B cell (primary cell): ENCODE measurements at regions of chr6 and their contacts with region 1.

Region 1: DNA sequence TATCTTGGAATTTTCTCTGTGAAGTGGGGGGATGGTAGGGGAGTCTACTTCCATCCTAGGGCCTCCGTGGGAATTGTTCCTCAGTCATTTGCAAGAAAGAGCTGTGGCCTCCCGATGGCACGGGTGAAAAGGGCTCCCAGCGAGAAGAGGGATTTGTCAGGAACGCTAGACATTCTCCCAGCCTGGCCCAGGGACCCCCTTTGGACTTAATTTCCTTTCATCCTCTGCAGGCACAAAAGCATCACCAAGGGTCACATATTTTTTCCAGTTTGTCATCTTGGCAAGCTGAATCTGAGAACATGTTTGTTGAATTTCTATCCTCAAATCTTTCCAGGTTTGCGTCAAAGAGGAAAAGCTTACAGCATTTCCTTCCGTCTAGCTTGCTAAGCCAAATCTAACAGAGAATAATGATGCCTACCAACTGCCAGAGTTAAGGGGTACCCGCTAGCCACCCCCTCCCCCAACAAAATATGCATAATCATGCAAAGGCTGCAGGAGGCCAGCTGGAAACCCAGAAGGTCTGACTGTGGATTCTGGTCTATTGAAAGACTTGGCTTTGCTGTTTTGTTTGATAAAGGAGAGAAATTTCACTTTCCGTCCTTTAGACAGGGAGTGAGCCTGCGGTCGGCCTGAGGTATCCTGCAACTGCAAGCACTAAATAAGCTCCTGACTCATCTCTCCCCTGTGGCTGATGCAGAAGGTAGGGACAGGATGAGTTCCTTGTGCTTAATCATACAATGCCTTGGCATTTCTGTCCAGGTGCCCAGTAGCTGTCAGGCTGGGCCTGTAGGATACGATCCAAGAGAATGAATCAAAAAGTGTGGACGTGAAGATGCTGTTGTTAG is 23.1 kb downstream of the PSMG4 start:
- DNase-seq: no peak
- ATAC-seq: no peak
- H3K4me3 ChIP-seq: no peak overlapping the region
- H3K4me3 Mint-ChIP-seq: no peak overlapping the region
- H3K27ac ChIP-seq: no peak overlapping the region
- H3K27ac Mint-ChIP-seq: no peak overlapping the region
- H3K4me1 ChIP-seq: peaks cover 0 to 3% of the 10 kb centered on the region in 2 donors
- H3K4me1 Mint-ChIP-seq: peaks cover 2% of the 10 kb centered on the region
- H3K27me3 ChIP-seq: no peaks in the 10 kb centered on the region
- H3K27me3 Mint-ChIP-seq: no peaks in the 10 kb centered on the region
- CTCF ChIP-seq: no peak

Region 2: GRCh38 chr6:3456755-3457466 is 175.1 kb after region 1 on chr6 and contains the start of gene SLC22A23:
- CTCF ChIA-PET with region 1: interaction called, 4 read pairs
- POLR2A ChIA-PET with region 1: no interaction called
- intact Hi-C with region 1: loop called (anchors 1 kb)
- DNase-seq: peak; percentile 81
- ATAC-seq: peak; percentile 80
- H3K4me3 ChIP-seq: peak within 1 kb of the TSS in 4 of 5 experiments; percentile 25 to 51 (median 45)
- H3K4me3 Mint-ChIP-seq: peak within 1 kb of the TSS; percentile 81
- H3K27ac ChIP-seq: no peak within 1 kb of the TSS
- H3K27ac Mint-ChIP-seq: peak within 1 kb of the TSS; percentile 42
- H3K4me1 ChIP-seq: peaks cover 23 to 24% of the 10 kb centered on the region in 2 donors
- H3K4me1 Mint-ChIP-seq: peaks cover 5% of the 10 kb centered on the region
- H3K27me3 ChIP-seq: peaks cover 0 to 58% (median 43%) of the 10 kb centered on the region in 4 experiments
- H3K27me3 Mint-ChIP-seq: peaks cover 38% of the 10 kb centered on the region
- CTCF ChIP-seq: peak; percentile 75
- total RNA-seq, gene SLC22A23: 0.75 and 1.4 TPM in 2 replicates

Region 3: DNA sequence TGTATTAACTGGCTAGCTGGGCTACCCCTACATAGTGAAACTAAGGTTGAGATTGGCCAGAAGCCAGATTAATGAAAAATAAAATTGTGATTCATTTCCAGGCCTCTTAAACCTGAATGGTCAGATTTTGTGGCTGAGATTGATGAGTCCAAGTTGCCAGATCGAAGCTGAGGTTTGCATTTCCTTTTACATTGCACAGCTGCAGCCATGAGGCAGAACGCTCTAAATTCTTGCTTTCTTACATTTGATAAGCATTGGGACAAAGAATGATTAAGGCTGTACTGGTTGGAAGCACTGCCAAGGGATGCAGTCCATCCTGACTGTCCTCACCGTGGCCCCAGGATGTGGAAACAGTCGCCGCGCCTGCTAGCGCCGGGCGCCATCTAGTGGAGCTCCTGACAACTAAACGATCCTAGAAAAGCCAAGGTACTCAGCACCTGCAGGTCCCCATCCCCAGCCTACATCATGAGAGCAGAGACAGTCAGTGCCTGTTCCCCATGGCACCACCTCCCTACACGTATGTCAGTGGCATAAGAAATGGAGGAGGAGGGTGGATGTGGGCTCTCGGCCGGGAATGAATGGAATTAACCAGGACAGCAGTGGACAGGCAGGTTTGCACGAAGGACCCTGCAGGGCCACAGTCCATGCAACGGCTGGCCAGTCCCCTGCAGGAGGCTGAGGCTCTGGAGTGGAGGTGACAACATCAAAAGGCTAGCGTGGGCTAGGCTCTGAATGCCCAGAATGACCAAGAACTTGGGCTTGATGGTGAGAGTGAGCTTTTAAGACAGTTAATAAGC is 450.7 kb after region 1 on chr6:
- CTCF ChIA-PET with region 1: interaction called, 269 read pairs
- POLR2A ChIA-PET with region 1: no interaction called
- intact Hi-C with region 1: no loop called
- DNase-seq: peak; percentile 72
- ATAC-seq: peak; percentile 67
- H3K4me3 ChIP-seq: no peak overlapping the region
- H3K4me3 Mint-ChIP-seq: no peak overlapping the region
- H3K27ac ChIP-seq: no peak overlapping the region
- H3K27ac Mint-ChIP-seq: no peak overlapping the region
- H3K4me1 ChIP-seq: no peaks in the 10 kb centered on the region
- H3K4me1 Mint-ChIP-seq: peaks cover 2% of the 10 kb centered on the region
- H3K27me3 ChIP-seq: no peaks in the 10 kb centered on the region
- H3K27me3 Mint-ChIP-seq: no peaks in the 10 kb centered on the region
- CTCF ChIP-seq: peak; percentile 82

Region 4: GRCh38 chr6:3977875-3978711 is 696.2 kb after region 1 on chr6:
- CTCF ChIA-PET with region 1: interaction called, 20 read pairs
- POLR2A ChIA-PET with region 1: no interaction called
- intact Hi-C with region 1: no loop called
- DNase-seq: peak; percentile 65
- ATAC-seq: peak; percentile 95
- H3K4me3 ChIP-seq: no peak overlapping the region
- H3K4me3 Mint-ChIP-seq: no peak overlapping the region
- H3K27ac ChIP-seq: no peak overlapping the region
- H3K27ac Mint-ChIP-seq: no peak overlapping the region
- H3K4me1 ChIP-seq: peaks cover 0 to 7% of the 10 kb centered on the region in 2 donors
- H3K4me1 Mint-ChIP-seq: peaks cover 4% of the 10 kb centered on the region
- H3K27me3 ChIP-seq: peaks cover 0 to 3% (median 0%) of the 10 kb centered on the region in 4 experiments
- H3K27me3 Mint-ChIP-seq: peaks cover 8% of the 10 kb centered on the region
- CTCF ChIP-seq: peak; percentile 70

Region 5: GRCh38 chr6:4155848-4156466 is 874.1 kb after region 1 on chr6:
- CTCF ChIA-PET with region 1: interaction called, 4 read pairs
- POLR2A ChIA-PET with region 1: no interaction called
- intact Hi-C with region 1: loop called (anchors 1 kb)
- DNase-seq: peak; percentile 85
- ATAC-seq: peak; percentile 78
- H3K4me3 ChIP-seq: no peak overlapping the region
- H3K4me3 Mint-ChIP-seq: no peak overlapping the region
- H3K27ac ChIP-seq: no peak overlapping the region
- H3K27ac Mint-ChIP-seq: no peak overlapping the region
- H3K4me1 ChIP-seq: peaks cover 4 to 12% of the 10 kb centered on the region in 2 donors
- H3K4me1 Mint-ChIP-seq: peaks cover 31% of the 10 kb centered on the region
- H3K27me3 ChIP-seq: peaks cover 0 to 6% (median 0%) of the 10 kb centered on the region in 4 experiments
- H3K27me3 Mint-ChIP-seq: peaks cover 10% of the 10 kb centered on the region
- CTCF ChIP-seq: peak; percentile 94